ENCODE measurements at regions of chr14 and their contacts with region 1.

Region 1: GRCh38 chr14:69107407-69108003 is 45.4 kb downstream of the DCAF5 start:
- DNase-seq: no peak
- H3K4me3 ChIP-seq: no peak overlapping the region
- CTCF ChIP-seq: peak; percentile 46

Region 2: GRCh38 chr14:68862954-68863594 is 244.4 kb before region 1 on chr14:
- CTCF ChIA-PET with region 1: interaction called, 141 read pairs
- POLR2A ChIA-PET with region 1: no interaction called
- DNase-seq: peak; percentile 16
- H3K4me3 ChIP-seq: no peak overlapping the region
- CTCF ChIP-seq: peak; percentile 81

Region 3: GRCh38 chr14:68896132-68896531 is 211.4 kb before region 1 on chr14:
- CTCF ChIA-PET with region 1: interaction called, 21 read pairs
- POLR2A ChIA-PET with region 1: no interaction called
- DNase-seq: no peak
- H3K4me3 ChIP-seq: no peak overlapping the region
- CTCF ChIP-seq: peak; percentile 48

Region 4: GRCh38 chr14:68926236-68926635 is 181.3 kb before region 1 on chr14:
- CTCF ChIA-PET with region 1: interaction called, 24 read pairs
- POLR2A ChIA-PET with region 1: no interaction called
- DNase-seq: no peak
- H3K4me3 ChIP-seq: no peak overlapping the region
- CTCF ChIP-seq: peak; percentile 51

Region 5: GRCh38 chr14:68958553-68958952 is 149.0 kb before region 1 on chr14:
- CTCF ChIA-PET with region 1: interaction called, 14 read pairs
- POLR2A ChIA-PET with region 1: interaction called, 3 read pairs
- DNase-seq: no peak
- H3K4me3 ChIP-seq: no peak overlapping the region
- CTCF ChIP-seq: no peak